ENCODE measurements at regions of chr9 and their contacts with region 1.

Region 1: GRCh38 chr9:89116064-89116804 is 62.4 kb downstream of the SHC3 start:
- DNase-seq: no peak
- ATAC-seq: no peak
- H3K4me3 ChIP-seq: no peak overlapping the region
- H3K27ac ChIP-seq: no peak overlapping the region
- H3K4me1 ChIP-seq: no peaks in the 10 kb centered on the region
- H3K27me3 ChIP-seq: peaks cover 0 to 3% (median 0%) of the 10 kb centered on the region in 7 donors
- CTCF ChIP-seq: no peak

Region 2: DNA sequence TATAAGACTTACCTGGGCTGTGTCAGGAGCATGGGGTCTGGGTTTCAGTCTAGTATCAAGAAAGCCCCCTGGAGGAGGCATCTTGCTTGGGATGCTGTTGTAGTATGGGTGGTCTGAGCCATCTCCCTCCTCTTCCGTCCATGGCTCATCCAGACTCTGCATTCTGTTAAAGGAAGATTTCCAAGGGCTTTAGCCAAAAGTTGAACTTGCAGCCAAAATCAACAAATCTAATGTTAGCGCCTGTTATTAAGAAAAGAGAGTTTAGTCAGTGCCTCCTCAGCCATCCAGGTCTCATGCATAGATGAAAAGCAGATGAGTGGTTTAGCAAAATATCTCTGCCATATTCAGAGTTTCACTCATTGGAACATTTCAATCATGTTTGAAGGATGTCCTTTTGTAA is 69.4 kb before region 1 on chr9:
- intact Hi-C with region 1: no loop called
- DNase-seq: no peak
- ATAC-seq: peak; percentile 44 to 81 (median 69)
- H3K4me3 ChIP-seq: no peak overlapping the region
- H3K27ac ChIP-seq: peak overlapping the region in 4 of 10 donors; percentile 3 to 23 (median 14)
- H3K4me1 ChIP-seq: peaks cover 0 to 4% (median 0%) of the 10 kb centered on the region in 9 donors
- H3K27me3 ChIP-seq: peaks cover 0 to 7% (median 0%) of the 10 kb centered on the region in 7 donors
- CTCF ChIP-seq: no peak

Region 3: GRCh38 chr9:89189215-89189614 is 73.0 kb after region 1 on chr9:
- intact Hi-C with region 1: no loop called
- DNase-seq: no peak
- ATAC-seq: no peak
- H3K4me3 ChIP-seq: no peak overlapping the region
- H3K27ac ChIP-seq: no peak overlapping the region
- H3K4me1 ChIP-seq: no peaks in the 10 kb centered on the region
- H3K27me3 ChIP-seq: peaks cover 0 to 9% (median 0%) of the 10 kb centered on the region in 7 donors
- CTCF ChIP-seq: no peak

Region 4: GRCh38 chr9:89225991-89226471 is 109.8 kb after region 1 on chr9:
- intact Hi-C with region 1: loop called in 1 of 10 experiments (anchors 10 kb)
- DNase-seq: no peak
- ATAC-seq: peak in 5 of 8 donors; percentile 43 to 72 (median 51)
- H3K4me3 ChIP-seq: no peak overlapping the region
- H3K27ac ChIP-seq: no peak overlapping the region
- H3K4me1 ChIP-seq: peaks cover 0 to 6% (median 0%) of the 10 kb centered on the region in 9 donors
- H3K27me3 ChIP-seq: peaks cover 0 to 13% (median 0%) of the 10 kb centered on the region in 7 donors
- CTCF ChIP-seq: no peak